ENCODE measurements at regions of chr5 and their contacts with region 1.

Region 1: GRCh38 chr5:35902046-35902676 is 36.3 kb downstream of the CAPSL start:
- DNase-seq: peak; percentile 49
- H3K4me3 Mint-ChIP-seq: peak overlapping the region; percentile 28
- H3K27ac Mint-ChIP-seq: peak overlapping the region; percentile 83
- H3K4me1 Mint-ChIP-seq: peaks cover 78% of the 10 kb centered on the region
- H3K27me3 Mint-ChIP-seq: no peaks in the 10 kb centered on the region

Region 2: GRCh38 chr5:35617435-35618303 is 284.5 kb before region 1 on chr5 and contains the start of gene SPEF2:
- intact Hi-C with region 1: loop called (anchors 2 kb)
- DNase-seq: peak; percentile 77
- H3K4me3 Mint-ChIP-seq: peak within 1 kb of the TSS; percentile 89
- H3K27ac Mint-ChIP-seq: peak within 1 kb of the TSS; percentile 95
- H3K4me1 Mint-ChIP-seq: peaks cover 28% of the 10 kb centered on the region
- H3K27me3 Mint-ChIP-seq: no peaks in the 10 kb centered on the region
- total RNA-seq, gene SPEF2: 10.0 and 11.5 TPM in 2 replicates

Region 3: GRCh38 chr5:35785601-35786085 is 116.5 kb before region 1 on chr5:
- intact Hi-C with region 1: loop called (anchors 2 kb)
- DNase-seq: no peak
- H3K4me3 Mint-ChIP-seq: no peak overlapping the region
- H3K27ac Mint-ChIP-seq: peak overlapping the region; percentile 85
- H3K4me1 Mint-ChIP-seq: peaks cover 66% of the 10 kb centered on the region
- H3K27me3 Mint-ChIP-seq: no peaks in the 10 kb centered on the region

Region 4: DNA sequence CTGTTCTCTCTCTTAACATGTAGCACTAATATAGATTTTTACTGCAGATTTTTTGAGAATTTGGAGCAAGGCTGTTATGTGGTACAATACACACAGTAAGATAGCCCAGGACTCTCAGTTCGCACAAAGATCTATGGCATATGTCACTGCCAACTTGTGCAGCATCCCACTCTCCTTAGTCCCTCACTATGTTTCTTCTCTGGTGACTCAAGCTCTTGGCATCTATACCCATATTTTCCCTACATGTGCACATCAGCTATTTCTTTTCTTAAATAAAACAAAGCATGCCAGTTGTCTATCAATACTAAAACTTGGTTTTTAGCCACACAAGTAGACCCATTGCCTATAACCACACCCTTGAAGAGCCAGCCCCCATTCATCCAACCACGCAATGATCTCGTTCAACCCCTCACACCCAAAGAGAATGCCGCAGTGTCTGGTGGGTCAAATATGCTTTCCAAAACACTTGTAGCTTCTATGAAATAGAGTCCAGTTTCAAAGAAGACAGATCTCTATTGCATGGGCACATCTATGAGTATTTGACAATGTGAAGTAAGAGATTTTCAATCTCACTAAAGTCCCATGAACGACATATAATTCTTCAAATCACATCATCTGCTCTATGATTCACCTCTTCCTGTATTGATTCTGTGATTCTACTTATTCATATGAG is 63.7 kb before region 1 on chr5:
- intact Hi-C with region 1: loop called (anchors 1 kb)
- DNase-seq: no peak
- H3K4me3 Mint-ChIP-seq: no peak overlapping the region
- H3K27ac Mint-ChIP-seq: peak overlapping the region; percentile 85
- H3K4me1 Mint-ChIP-seq: peaks cover 51% of the 10 kb centered on the region
- H3K27me3 Mint-ChIP-seq: no peaks in the 10 kb centered on the region

Region 5: DNA sequence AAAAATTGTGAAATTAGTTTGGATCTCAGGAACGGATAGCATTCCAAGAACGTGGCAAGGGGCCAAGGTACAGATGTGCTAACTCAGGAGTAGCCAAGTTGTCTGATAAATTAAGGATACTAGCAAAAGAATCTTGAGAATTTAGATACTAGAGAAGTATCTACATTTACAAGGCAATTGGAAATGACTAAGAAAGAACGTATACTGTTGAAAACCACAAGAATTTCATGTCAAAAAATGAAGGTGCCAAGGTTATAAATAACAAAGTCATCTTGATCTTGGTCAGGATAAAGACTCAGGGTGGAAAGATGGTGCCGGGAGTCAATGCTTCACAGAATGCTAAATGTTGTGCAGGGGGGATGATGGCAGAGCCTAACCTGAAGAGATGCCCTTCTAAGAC is 17.0 kb after region 1 on chr5:
- intact Hi-C with region 1: loop called (anchors 1 kb)
- DNase-seq: no peak
- H3K4me3 Mint-ChIP-seq: no peak overlapping the region
- H3K27ac Mint-ChIP-seq: peak overlapping the region; percentile 83
- H3K4me1 Mint-ChIP-seq: peaks cover 37% of the 10 kb centered on the region
- H3K27me3 Mint-ChIP-seq: no peaks in the 10 kb centered on the region

Region 6: DNA sequence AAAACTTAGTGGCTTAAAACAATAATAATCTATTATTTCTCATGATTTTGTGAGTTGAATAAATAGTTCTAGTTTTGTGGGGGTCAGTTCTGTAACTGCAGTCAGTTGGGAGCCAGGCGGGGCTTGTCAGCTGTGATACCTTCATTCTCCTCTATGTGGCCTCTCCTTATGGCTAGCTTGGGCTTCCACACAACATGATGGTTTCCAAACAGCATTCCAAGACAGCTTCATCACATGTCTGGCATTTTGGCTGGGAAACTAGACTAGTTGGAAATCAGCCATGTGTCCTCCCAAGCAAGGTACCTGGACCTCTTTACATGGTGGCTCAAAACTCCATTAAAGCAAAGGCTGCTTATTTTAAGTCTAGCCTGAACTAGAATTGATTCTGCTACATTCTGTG is 460.9 kb after region 1 on chr5:
- intact Hi-C with region 1: no loop called
- DNase-seq: no peak
- H3K4me3 Mint-ChIP-seq: no peak overlapping the region
- H3K27ac Mint-ChIP-seq: no peak overlapping the region
- H3K4me1 Mint-ChIP-seq: peaks cover 7% of the 10 kb centered on the region
- H3K27me3 Mint-ChIP-seq: no peaks in the 10 kb centered on the region

Measured in activated T-helper 2 cell treated with anti-CD3 and anti-CD28 coated beads, Interferon-gamma antibody, Interleukin-2, Interleukin-4, amounts not matched to agents 10 μg/mL and 5 μg/mL and 100 μg/mL, durations not matched to agents 14 hours and 24 hours and 36 hours (primary cell).